ENCODE measurements at regions of chr1 and their contacts with region 1.

Region 1: DNA sequence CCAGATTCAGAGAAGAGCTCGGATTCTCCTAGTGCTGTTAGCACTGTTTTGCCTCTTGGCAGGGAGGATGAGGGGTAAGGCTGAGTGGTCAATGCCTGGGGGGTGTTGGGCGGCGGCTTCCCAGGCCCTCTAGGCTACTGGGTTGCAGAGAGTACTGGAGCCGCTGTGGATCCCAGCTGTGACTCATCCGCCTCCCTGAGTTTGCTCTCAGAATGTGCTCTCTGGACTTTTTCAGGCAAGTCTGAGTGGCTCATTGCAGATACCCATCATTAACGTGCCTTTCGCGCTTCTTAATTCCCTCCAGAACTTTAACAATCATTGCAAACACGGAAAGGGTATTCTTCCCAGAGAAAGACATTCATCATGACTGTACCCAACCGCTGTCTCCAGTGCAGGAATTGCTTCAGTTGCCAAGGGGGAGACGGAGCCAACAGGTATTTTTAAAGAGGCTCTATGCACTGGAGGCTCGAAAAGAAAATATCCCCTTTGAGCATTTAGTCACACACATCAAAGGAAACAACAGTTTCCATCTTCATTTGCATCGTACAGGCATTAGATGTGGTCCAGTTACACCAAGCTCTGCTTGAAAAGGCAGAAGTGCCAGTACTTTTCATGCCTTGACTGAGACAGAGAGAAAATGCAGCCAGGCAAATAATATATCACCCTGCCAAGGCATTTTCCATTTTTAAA is 14.4 kb upstream of the CAMTA1 start:
- DNase-seq: no peak
- H3K4me3 ChIP-seq: no peak overlapping the region
- CTCF ChIP-seq: no peak

Region 2: GRCh38 chr1:6727535-6727934 is 43.4 kb before region 1 on chr1:
- in situ Hi-C with region 1: loop called (anchors 5 kb)
- DNase-seq: no peak
- H3K4me3 ChIP-seq: no peak overlapping the region
- CTCF ChIP-seq: peak; percentile 89

Region 3: DNA sequence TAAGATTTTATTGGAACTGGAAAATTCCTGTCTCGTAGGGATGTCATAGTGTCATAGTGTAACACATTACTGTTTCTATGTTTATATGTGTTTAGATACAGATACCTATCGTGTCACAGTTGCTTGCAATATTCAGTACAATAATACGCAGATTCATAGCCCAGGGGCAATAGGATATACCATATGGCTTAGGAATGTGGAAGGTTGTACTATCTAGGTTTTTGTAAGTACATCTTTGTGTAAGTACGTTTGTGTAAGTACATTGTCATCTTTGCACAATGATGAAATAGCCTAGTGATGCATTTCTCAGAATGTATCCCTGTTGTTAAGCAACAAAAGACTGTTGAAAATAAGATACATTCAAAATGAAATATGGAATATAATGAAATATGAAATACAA is 83.3 kb after region 1 on chr1:
- in situ Hi-C with region 1: no loop called
- DNase-seq: no peak
- H3K4me3 ChIP-seq: no peak overlapping the region
- CTCF ChIP-seq: no peak

Region 4: DNA sequence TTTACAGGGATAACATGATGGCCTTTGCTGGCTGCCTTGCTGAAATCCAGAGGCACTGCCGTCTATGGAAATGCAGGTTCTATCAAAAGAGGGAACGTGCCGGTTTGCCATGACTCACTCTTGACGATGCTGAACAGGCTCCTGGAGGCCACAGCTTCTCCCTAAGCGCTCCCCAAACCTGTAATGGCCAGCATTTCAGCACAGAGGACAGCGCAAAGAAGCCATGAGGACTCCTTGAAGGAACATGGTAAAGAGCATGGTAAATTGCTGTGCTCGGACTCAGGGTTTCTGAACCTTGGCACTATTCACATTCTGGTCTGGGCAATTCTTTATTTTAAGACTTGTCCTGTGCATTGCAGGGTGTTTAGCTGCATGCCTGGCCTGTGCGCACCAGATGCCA is 231.8 kb after region 1 on chr1:
- in situ Hi-C with region 1: no loop called
- DNase-seq: no peak
- H3K4me3 ChIP-seq: no peak overlapping the region
- CTCF ChIP-seq: no peak